Naive thymus-derived CD4-positive, alpha-beta T cell (primary cell): ENCODE measurements at regions of chr17 and their contacts with region 1.

Region 1: GRCh38 chr17:50737118-50737698 is 17.8 kb downstream of the LUC7L3 start:
- DNase-seq: no peak
- ATAC-seq: no peak
- H3K4me3 ChIP-seq: no peak overlapping the region
- H3K4me3 Mint-ChIP-seq: no peak overlapping the region
- H3K27ac ChIP-seq: no peak overlapping the region
- H3K27ac Mint-ChIP-seq: peak overlapping the region in 6 of 9 donors; percentile 2 to 82 (median 54)
- H3K4me1 ChIP-seq: peaks cover 5 to 8% of the 10 kb centered on the region in 2 donors
- H3K4me1 Mint-ChIP-seq: peaks cover 28 to 63% (median 47%) of the 10 kb centered on the region in 7 donors
- H3K27me3 ChIP-seq: no peaks in the 10 kb centered on the region
- H3K27me3 Mint-ChIP-seq: no peaks in the 10 kb centered on the region

Region 2: GRCh38 chr17:50686494-50687199 is 50.6 kb before region 1 on chr17:
- CTCF ChIA-PET with region 1: no interaction called
- POLR2A ChIA-PET with region 1: no interaction called
- intact Hi-C with region 1: no loop called
- DNase-seq: no peak
- ATAC-seq: no peak
- H3K4me3 ChIP-seq: no peak overlapping the region
- H3K4me3 Mint-ChIP-seq: no peak overlapping the region
- H3K27ac ChIP-seq: no peak overlapping the region
- H3K27ac Mint-ChIP-seq: no peak overlapping the region
- H3K4me1 ChIP-seq: no peaks in the 10 kb centered on the region
- H3K4me1 Mint-ChIP-seq: peaks cover 0 to 8% (median 0%) of the 10 kb centered on the region in 7 donors
- H3K27me3 ChIP-seq: no peaks in the 10 kb centered on the region
- H3K27me3 Mint-ChIP-seq: peaks cover 0 to 23% (median 0%) of the 10 kb centered on the region in 5 donors

Region 3: GRCh38 chr17:50719144-50719923 is 17.9 kb before region 1 on chr17 and contains the start of gene LUC7L3:
- CTCF ChIA-PET with region 1: no interaction called
- POLR2A ChIA-PET with region 1: interaction called, 5 read pairs
- intact Hi-C with region 1: loop called in 1 of 2 experiments (anchors 2 kb)
- DNase-seq: peak; percentile 88 to 97 (median 95)
- ATAC-seq: peak; percentile 98
- H3K4me3 ChIP-seq: peak within 1 kb of the TSS; percentile 92
- H3K4me3 Mint-ChIP-seq: peak within 1 kb of the TSS; percentile 84 to 99 (median 98)
- H3K27ac ChIP-seq: peak within 1 kb of the TSS; percentile 95
- H3K27ac Mint-ChIP-seq: peak within 1 kb of the TSS; percentile 93 to 100 (median 99)
- H3K4me1 ChIP-seq: peaks cover 22 to 26% of the 10 kb centered on the region in 2 donors
- H3K4me1 Mint-ChIP-seq: peaks cover 19 to 37% (median 27%) of the 10 kb centered on the region in 7 donors
- H3K27me3 ChIP-seq: no peaks in the 10 kb centered on the region
- H3K27me3 Mint-ChIP-seq: no peaks in the 10 kb centered on the region
- total RNA-seq, gene LUC7L3: 131 to 331 (median 149) TPM